HEK293 (cell line): ENCODE measurements at regions of chr3 and their contacts with region 1.

Region 1: GRCh38 chr3:122258757-122259371 is 66.2 kb upstream of the CSTA start:
- H3K4me3 ChIP-seq: no peak overlapping the region
- H3K27ac ChIP-seq: no peak overlapping the region
- H3K4me1 ChIP-seq: no peaks in the 10 kb centered on the region
- CTCF ChIP-seq: peak; percentile 65

Region 2: GRCh38 chr3:121545574-121546455 is 713.0 kb before region 1 on chr3 and contains the start of gene POLQ:
- CTCF ChIA-PET with region 1: interaction called, 14 read pairs
- POLR2A ChIA-PET with region 1: no interaction called
- H3K4me3 ChIP-seq: peak within 1 kb of the TSS; percentile 95
- H3K27ac ChIP-seq: peak within 1 kb of the TSS; percentile 33; the same call in 1 of the 2 replicates
- H3K4me1 ChIP-seq: no peaks in the 10 kb centered on the region
- CTCF ChIP-seq: no peak

Region 3: DNA sequence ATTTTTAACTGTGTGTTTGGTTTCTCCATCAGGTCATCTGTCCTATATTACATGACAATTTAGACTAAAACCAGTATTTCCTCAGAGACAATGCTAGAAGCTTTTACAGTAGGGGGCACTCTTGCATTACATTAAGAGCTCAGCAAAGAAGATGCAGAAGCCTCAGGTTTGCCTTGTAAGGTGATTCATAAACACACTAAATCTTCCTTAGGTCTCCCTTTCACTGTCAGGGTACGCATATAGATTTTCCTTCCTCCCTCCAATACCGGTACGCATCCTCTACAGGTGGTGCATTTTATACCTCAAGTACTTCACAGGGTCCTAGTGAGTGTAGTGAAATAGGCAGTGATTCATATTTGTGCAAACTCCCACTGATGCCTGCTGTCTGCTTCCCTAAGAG is 157.2 kb before region 1 on chr3:
- CTCF ChIA-PET with region 1: interaction called, 20 read pairs
- POLR2A ChIA-PET with region 1: interaction called, 6 read pairs
- H3K4me3 ChIP-seq: no peak overlapping the region
- H3K27ac ChIP-seq: no peak overlapping the region
- H3K4me1 ChIP-seq: no peaks in the 10 kb centered on the region
- CTCF ChIP-seq: 0 out of 2 replicates have a peak, but pooled peaks have one; percentile 13

Region 4: GRCh38 chr3:122533931-122534334 is 275.1 kb after region 1 on chr3:
- CTCF ChIA-PET with region 1: no interaction called
- POLR2A ChIA-PET with region 1: no interaction called
- H3K4me3 ChIP-seq: no peak overlapping the region
- H3K27ac ChIP-seq: no peak overlapping the region
- H3K4me1 ChIP-seq: no peaks in the 10 kb centered on the region
- CTCF ChIP-seq: no peak